Mammary epithelial cell (primary cell): ENCODE measurements at regions of chr2 and their contacts with region 1.

Region 1: DNA sequence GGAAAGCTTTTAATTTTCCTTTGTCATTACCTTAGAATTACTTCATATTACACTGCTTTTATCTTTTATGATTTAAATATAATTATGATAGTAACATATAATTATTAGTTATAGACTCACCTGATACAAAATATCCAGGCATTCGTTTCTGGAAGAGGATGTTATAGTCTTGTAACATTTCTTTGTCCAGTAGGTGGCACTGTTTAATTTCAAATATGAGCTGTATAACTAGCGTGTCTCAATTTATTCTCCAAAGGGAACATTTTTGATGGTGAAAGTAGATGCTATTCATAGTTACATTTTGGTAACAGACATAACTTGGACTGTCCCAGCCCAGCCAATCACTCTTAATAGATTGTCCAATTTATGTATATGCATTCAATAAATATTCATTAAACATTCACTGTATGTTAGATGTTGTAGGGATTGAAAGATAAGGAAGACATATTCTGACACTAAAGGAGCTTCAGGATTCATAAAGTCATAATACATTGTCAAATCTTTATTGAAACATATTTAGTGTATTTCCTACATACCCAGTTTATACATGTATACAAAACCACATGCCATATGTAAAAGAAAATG is 19.2 kb downstream of the DAW1 start:
- DNase-seq: peak; percentile 42
- H3K4me3 ChIP-seq: no peak overlapping the region
- H3K27ac ChIP-seq: no peak overlapping the region
- H3K4me1 ChIP-seq: peaks cover 10% of the 10 kb centered on the region
- H3K27me3 ChIP-seq: no peaks in the 10 kb centered on the region
- CTCF ChIP-seq: peak; percentile 46 to 54

Region 2: DNA sequence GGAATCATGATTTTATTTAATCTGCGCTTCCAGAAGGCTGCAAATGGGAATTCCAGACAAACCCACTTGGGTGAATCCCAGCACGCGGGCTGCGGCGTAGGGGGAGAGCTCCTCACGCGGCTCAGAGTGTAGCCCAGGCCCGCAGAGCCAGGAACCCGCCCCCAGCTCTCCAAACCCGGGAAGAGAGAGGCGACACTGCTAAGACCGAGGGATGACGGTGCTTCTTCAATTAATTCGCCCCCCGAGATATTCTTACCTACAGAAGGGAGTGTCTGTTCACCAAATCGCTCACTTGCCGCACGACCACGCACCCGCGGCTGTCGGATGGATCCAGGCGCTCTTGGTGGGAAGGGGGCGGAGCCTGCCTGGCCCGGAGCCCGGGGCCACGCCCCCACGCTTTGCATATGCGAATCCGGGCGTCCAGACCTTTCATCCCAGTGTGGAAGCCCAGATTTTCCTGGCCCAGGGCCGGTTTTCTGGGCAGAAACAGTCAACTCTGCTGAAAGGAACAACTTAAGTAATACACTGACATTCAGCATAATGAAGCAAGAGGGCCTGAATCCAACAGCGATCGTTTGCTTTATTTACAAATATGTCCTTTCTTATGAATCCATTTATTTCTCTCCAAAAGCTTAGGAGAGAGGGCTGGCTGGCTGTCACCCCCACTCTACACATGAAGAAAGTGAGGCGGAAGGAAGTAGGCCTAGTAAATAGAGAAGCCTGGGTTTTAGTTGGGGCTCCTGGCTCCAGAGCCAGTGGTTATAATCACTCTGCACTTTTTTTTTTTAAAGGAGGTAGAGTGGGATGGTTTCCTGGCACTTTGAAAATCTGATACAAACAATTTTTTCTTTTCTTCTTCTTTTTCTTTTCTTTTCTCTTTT is 172.7 kb before region 1 on chr2 and contains the start of gene SLC19A3:
- CTCF ChIA-PET with region 1: no interaction called
- dilution Hi-C with region 1: no loop called
- in situ Hi-C with region 1: no loop called
- intact Hi-C with region 1: no loop called
- DNase-seq: peak; percentile 35
- H3K4me3 ChIP-seq: peak within 1 kb of the TSS; percentile 29 to 41 (median 34)
- H3K27ac ChIP-seq: no peak within 1 kb of the TSS
- H3K4me1 ChIP-seq: peaks cover 9% of the 10 kb centered on the region
- H3K27me3 ChIP-seq: no peaks in the 10 kb centered on the region
- CTCF ChIP-seq: no peak
- total RNA-seq, gene SLC19A3: 0.35 to 0.83 TPM

Region 3: GRCh38 chr2:227796045-227796711 is 94.4 kb before region 1 on chr2:
- CTCF ChIA-PET with region 1: no interaction called
- dilution Hi-C with region 1: loop called (anchors 5 kb)
- in situ Hi-C with region 1: no loop called
- intact Hi-C with region 1: no loop called
- DNase-seq: peak; percentile 52
- H3K4me3 ChIP-seq: no peak overlapping the region
- H3K27ac ChIP-seq: no peak overlapping the region
- H3K4me1 ChIP-seq: no peaks in the 10 kb centered on the region
- H3K27me3 ChIP-seq: no peaks in the 10 kb centered on the region
- CTCF ChIP-seq: no peak

Region 4: GRCh38 chr2:228048838-228049490 is 158.4 kb after region 1 on chr2:
- CTCF ChIA-PET with region 1: no interaction called
- dilution Hi-C with region 1: no loop called
- in situ Hi-C with region 1: no loop called
- intact Hi-C with region 1: loop called (anchors 2 kb)
- DNase-seq: peak; percentile 59
- H3K4me3 ChIP-seq: no peak overlapping the region
- H3K27ac ChIP-seq: no peak overlapping the region
- H3K4me1 ChIP-seq: no peaks in the 10 kb centered on the region
- H3K27me3 ChIP-seq: no peaks in the 10 kb centered on the region
- CTCF ChIP-seq: peak; percentile 58 to 73